Tibial artery (tissue), 4 donors: ENCODE measurements at regions of chr1 and their contacts with region 1.

Region 1: GRCh38 chr1:94541175-94542087 is at the start of gene F3:
- DNase-seq: peak; percentile 92 to 94
- H3K4me3 ChIP-seq: peak within 1 kb of the TSS; percentile 68 to 76
- H3K27ac ChIP-seq: peak within 1 kb of the TSS; percentile 81 to 82
- H3K4me1 ChIP-seq: peaks cover 0 to 50% (median 17%) of the 10 kb centered on the region in 4 donors
- H3K27me3 ChIP-seq: no peaks in the 10 kb centered on the region
- CTCF ChIP-seq: no peak

Region 2: DNA sequence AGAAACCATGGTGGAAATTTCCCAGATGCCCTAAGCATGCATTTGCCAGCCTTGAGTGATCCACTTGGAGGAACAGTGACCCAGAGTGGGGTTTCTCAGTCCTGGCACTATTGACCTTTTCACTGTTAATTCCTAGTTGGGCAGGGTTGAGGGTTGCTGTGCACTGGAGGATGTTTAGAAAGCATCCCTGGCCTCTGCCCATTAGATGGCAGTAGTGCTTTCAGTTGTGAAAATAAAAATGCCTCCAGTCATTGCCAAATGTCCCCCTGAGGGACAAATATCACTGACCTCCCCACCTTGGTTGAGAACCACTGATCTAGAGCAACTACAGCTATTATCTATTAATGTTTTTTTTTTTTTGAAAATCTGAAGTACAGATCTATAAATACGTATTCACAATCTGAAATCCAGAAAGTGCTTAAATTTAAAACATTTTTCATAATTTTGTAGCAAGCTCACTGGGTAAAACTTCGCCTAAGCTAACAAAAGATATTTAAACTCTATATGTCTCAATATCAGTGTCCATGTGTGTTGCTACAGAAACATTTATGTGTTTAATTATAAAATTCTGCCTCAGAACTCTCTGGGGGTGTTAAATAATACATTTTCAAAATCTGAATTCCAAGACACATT is 27.2 kb before region 1 on chr1:
- intact Hi-C with region 1: no loop called
- DNase-seq: no peak
- H3K4me3 ChIP-seq: no peak overlapping the region
- H3K27ac ChIP-seq: no peak overlapping the region
- H3K4me1 ChIP-seq: no peaks in the 10 kb centered on the region
- H3K27me3 ChIP-seq: no peaks in the 10 kb centered on the region
- CTCF ChIP-seq: peak; percentile 37 to 48

Region 3: GRCh38 chr1:94634977-94635416 is 93.6 kb after region 1 on chr1:
- intact Hi-C with region 1: loop called (anchors 10 kb)
- DNase-seq: no peak
- H3K4me3 ChIP-seq: no peak overlapping the region
- H3K27ac ChIP-seq: no peak overlapping the region
- H3K4me1 ChIP-seq: peaks cover 0 to 5% (median 0%) of the 10 kb centered on the region in 4 donors
- H3K27me3 ChIP-seq: no peaks in the 10 kb centered on the region
- CTCF ChIP-seq: no peak

Region 4: DNA sequence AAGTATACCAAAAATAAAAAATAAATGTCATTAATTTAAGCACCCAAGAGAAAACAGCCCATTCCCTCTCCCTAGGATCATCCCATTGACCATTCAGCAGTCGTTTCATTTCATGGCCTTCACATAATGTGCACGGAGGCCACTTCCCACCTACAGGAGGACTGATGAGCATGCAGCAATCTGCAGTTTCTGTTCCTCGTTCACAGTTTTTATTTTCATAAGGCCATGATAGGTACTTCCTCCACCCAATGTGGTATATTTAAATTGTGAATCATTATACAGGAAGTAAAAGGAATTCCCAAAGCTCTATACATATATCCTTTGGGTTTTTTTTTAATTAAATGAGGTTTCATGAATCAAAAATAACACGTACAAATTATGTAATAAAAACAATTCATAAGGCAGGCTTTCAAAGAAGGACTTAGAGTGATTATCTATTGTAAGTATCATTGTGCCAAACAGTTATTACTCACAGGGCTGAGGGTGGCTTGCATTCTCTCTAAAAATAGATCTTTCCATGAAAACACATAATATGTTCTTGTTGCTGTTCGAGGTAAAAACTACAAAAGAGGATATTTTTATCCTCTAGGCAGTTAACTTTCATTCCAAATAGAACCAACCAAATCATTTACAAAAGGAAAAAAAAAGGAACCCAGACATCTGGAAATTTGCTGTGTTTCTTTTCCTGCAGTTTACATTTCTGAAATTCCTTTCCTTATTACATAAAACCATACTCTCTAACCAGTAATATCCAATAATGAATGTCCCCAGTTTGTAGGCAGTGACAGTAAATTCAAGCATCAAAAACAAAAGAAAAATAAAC is 251.3 kb after region 1 on chr1:
- intact Hi-C with region 1: loop called (anchors 5 kb)
- DNase-seq: no peak
- H3K4me3 ChIP-seq: no peak overlapping the region
- H3K27ac ChIP-seq: peak overlapping the region; percentile 61 to 67
- H3K4me1 ChIP-seq: peaks cover 0 to 34% (median 9%) of the 10 kb centered on the region in 4 donors
- H3K27me3 ChIP-seq: no peaks in the 10 kb centered on the region
- CTCF ChIP-seq: peak; percentile 22 to 23